ENCODE measurements at regions of chr5 and their contacts with region 1.

Region 1: GRCh38 chr5:9898319-9898718 is 268.2 kb upstream of the TAS2R1 start:
- DNase-seq: peak; percentile 5
- ATAC-seq: peak; percentile 84
- H3K4me3 ChIP-seq: no peak overlapping the region
- H3K27ac ChIP-seq: no peak overlapping the region
- H3K4me1 ChIP-seq: no peaks in the 10 kb centered on the region
- H3K27me3 ChIP-seq: no peaks in the 10 kb centered on the region; a peak in 1 of 5 replicates
- CTCF ChIP-seq: peak; percentile 48
- EP300 ChIP-seq: no peak
- POLR2A ChIP-seq: no peak
- RAD21 ChIP-seq: no peak

Region 2: DNA sequence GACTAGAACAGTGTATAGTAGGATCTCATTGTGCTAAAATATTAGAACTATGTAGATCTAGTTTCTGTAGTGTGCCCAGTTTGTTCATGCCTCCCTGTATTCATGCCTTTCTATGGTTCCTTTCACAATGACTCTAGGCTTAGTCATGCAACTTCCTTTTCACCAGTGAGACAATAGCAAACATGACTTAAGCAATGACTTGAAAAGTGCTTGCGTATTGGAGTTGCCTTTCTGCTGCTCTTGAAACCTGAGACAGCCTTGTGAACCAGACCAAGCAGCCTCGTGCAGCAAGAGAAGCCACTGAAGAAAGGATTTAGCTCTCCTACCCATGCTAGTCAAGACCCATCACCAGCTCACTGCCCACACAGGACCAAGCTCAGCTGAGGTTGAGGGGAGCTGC is 26.3 kb after region 1 on chr5:
- CTCF ChIA-PET with region 1: no interaction called
- POLR2A ChIA-PET with region 1: no interaction called
- in situ Hi-C with region 1: no loop called
- intact Hi-C with region 1: loop called (anchors 1 kb)
- DNase-seq: no peak
- ATAC-seq: no peak
- H3K4me3 ChIP-seq: no peak overlapping the region
- H3K27ac ChIP-seq: no peak overlapping the region
- H3K4me1 ChIP-seq: no peaks in the 10 kb centered on the region
- H3K27me3 ChIP-seq: no peaks in the 10 kb centered on the region
- CTCF ChIP-seq: no peak
- EP300 ChIP-seq: no peak
- POLR2A ChIP-seq: no peak
- RAD21 ChIP-seq: no peak

Measured in HepG2 (cell line).